ENCODE measurements at regions of chr2 and their contacts with region 1.

Region 1: DNA sequence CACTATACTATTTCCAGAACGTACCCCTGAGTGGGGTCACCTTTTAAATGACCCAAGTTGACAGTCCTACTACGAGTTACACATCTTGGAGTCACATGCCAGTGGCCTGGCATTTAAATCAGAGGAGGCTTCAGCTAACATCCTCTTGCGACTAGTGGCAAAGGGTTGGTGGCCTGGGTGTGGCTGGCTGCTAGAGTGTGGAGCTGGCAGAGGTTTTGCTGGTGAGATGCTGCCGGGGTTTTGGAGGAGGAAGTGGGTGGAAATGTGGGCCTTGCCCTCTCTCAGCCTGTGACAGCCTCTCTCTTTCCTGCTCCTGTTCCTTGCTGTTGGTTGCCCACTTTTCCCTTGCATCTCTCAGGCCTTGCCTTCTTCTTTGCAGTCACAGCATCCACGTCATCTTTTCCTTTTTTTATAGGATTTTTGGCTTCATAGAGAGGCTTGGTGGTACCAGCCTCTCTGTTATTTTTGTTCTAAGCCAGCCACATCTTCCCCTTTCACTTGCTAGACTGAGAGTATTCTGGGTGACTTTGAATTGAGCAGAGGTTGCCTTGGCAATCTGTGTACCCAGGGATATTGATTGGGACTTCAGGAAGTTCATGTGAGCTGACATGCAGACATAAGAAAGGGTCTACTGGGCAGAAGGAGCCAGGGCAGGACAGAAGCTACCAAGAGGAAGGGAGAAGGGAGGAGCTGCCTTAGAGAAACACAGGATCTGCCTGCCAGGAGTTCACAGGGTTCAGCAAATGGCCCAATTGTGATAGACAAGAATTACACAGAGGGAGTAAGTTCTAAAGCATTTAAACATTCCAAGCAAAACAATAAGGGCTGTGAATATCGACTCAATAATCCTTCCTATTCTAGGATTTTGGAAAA is 55.4 kb downstream of the CDC42EP3 start:
- DNase-seq: peak; percentile 38
- ATAC-seq: peak; percentile 84
- H3K4me3 Mint-ChIP-seq: peak overlapping the region; percentile 49
- H3K27ac Mint-ChIP-seq: peak overlapping the region; percentile 94
- H3K4me1 Mint-ChIP-seq: peaks cover 48% of the 10 kb centered on the region
- H3K27me3 Mint-ChIP-seq: no peaks in the 10 kb centered on the region
- CTCF ChIP-seq: no peak

Region 2: DNA sequence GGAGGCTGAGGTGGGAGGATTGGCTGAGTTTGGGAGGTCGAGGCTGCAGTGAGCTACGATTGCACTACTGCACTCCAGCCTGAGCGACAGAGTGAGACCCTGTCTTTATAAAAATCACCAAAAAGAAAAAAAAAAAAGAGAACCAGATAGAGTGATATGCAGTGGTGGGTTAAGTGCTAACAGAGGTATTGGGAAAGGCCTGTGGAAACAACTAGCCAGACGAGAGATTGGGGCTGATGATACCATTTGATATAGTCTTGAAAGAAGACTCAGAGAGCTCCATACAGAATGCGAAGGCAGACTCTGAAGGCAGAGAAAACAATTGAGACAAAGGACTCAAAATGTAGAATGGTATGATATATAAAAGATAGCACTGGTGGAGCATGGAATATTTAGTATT is 78.7 kb before region 1 on chr2:
- CTCF ChIA-PET with region 1: no interaction called
- POLR2A ChIA-PET with region 1: no interaction called
- intact Hi-C with region 1: loop called (anchors 5 kb)
- DNase-seq: no peak
- ATAC-seq: no peak
- H3K4me3 Mint-ChIP-seq: no peak overlapping the region
- H3K27ac Mint-ChIP-seq: no peak overlapping the region
- H3K4me1 Mint-ChIP-seq: no peaks in the 10 kb centered on the region
- H3K27me3 Mint-ChIP-seq: no peaks in the 10 kb centered on the region
- CTCF ChIP-seq: no peak

Region 3: GRCh38 chr2:37600735-37601134 is 15.3 kb before region 1 on chr2:
- CTCF ChIA-PET with region 1: interaction called, 3 read pairs
- POLR2A ChIA-PET with region 1: interaction called, 4 read pairs
- intact Hi-C with region 1: loop called (anchors 1 kb)
- DNase-seq: no peak
- ATAC-seq: peak; percentile 85
- H3K4me3 Mint-ChIP-seq: peak overlapping the region; percentile 60
- H3K27ac Mint-ChIP-seq: peak overlapping the region; percentile 37
- H3K4me1 Mint-ChIP-seq: peaks cover 33% of the 10 kb centered on the region
- H3K27me3 Mint-ChIP-seq: no peaks in the 10 kb centered on the region
- CTCF ChIP-seq: no peak

Region 4: GRCh38 chr2:37635504-37636380 is 19.7 kb after region 1 on chr2:
- CTCF ChIA-PET with region 1: no interaction called
- POLR2A ChIA-PET with region 1: interaction called, 8 read pairs
- intact Hi-C with region 1: loop called (anchors 1 kb)
- DNase-seq: peak; percentile 44
- ATAC-seq: peak; percentile 84
- H3K4me3 Mint-ChIP-seq: peak overlapping the region; percentile 52
- H3K27ac Mint-ChIP-seq: peak overlapping the region; percentile 95
- H3K4me1 Mint-ChIP-seq: peaks cover 50% of the 10 kb centered on the region
- H3K27me3 Mint-ChIP-seq: no peaks in the 10 kb centered on the region
- CTCF ChIP-seq: no peak

Region 5: DNA sequence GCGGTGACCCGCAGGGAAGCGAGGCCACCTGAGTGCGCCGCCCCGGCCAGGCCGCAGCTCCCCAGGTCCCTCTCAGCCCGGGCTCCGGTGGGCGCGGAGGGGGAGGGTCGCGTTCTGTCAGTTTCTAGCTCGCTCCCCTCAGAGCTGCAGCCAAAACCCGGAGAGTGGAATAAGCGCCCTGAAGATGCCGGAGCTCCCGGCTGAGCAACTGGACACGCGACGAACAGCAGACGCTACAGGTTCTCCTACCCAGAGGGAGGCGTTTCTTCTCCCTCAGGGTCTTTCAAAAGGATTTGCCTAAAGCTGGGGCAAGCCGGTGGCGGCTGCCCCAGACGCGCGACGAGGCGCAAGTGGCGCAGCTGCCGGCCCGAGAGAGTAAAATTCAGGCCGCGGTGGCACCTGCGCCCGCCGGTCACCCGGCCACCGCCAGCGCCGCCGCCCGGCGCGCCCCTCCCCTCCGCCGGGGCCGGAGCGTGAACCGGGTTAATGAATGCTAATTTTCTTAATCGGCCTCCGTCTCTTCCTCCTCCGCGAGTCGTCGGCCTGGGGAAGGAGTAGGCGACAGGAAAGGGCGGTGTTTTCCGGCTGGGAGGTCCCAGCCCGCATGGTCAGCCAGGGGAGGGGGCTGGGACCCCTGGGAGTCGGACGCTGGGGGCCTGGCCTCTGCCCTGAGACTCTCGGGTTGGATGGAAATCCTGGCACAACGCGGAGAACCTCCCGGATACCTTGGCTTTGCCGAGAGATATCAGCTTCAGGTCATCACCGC is 56.2 kb after region 1 on chr2:
- CTCF ChIA-PET with region 1: no interaction called
- POLR2A ChIA-PET with region 1: interaction called, 11 read pairs
- intact Hi-C with region 1: no loop called
- DNase-seq: peak; percentile 68
- ATAC-seq: peak; percentile 54
- H3K4me3 Mint-ChIP-seq: peak overlapping the region; percentile 90
- H3K27ac Mint-ChIP-seq: peak overlapping the region; percentile 84
- H3K4me1 Mint-ChIP-seq: peaks cover 50% of the 10 kb centered on the region
- H3K27me3 Mint-ChIP-seq: no peaks in the 10 kb centered on the region
- CTCF ChIP-seq: no peak